H1 (cell line): ENCODE measurements at regions of chr13 and their contacts with region 1.

Region 1: GRCh38 chr13:42969558-42970172 is 22.4 kb downstream of the EPSTI1 start:
- DNase-seq: peak in 1 of 2 experiments; percentile 93
- H3K4me3 ChIP-seq: no peak overlapping the region
- H3K27ac ChIP-seq: no peak overlapping the region
- H3K4me1 ChIP-seq: peaks cover 3 to 12% (median 4%) of the 10 kb centered on the region in 4 experiments; a peak in 5 of 7 replicates
- H3K27me3 ChIP-seq: no peaks in the 10 kb centered on the region
- CTCF ChIP-seq: peak; percentile 71 to 82 (median 81)
- EP300 ChIP-seq: no peak
- POLR2A ChIP-seq: no peak
- RAD21 ChIP-seq: peak; percentile 67 to 72

Region 2: DNA sequence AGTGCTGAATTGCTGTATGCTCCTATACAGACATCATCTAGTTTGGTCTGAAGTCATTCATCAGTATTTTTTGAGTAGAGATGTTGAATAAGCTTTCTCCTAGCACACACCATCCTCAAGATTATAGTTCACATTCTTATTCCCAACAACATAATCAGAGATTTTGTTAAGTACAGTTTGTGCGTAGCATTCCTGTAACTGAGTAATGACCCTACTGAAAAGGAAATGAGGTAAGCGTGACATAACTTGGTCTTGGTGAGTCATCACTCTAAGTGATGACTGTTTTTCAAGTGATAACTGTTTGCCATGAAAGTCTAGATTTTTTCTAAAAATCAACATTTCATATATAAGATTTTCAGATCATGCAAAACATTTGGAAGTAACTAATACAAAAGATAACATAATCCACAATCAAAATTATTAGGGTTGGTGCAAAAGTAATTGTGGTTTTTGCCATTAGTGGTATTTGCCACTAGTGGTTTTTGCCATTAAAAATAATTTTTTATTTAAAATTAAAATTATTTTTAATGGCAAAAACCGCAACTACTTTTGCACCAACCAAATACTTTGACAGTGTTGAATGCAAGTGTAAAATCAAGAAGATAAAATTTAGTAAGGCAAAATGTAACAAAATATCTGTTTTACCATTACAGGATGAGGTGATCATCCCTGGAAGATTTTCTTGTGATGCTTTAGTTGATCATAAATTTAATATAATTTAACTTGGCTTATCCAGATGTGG is 206.6 kb before region 1 on chr13:
- CTCF ChIA-PET with region 1: no interaction called
- POLR2A ChIA-PET with region 1: no interaction called
- DNase-seq: no peak
- H3K4me3 ChIP-seq: no peak overlapping the region
- H3K27ac ChIP-seq: no peak overlapping the region
- H3K4me1 ChIP-seq: no peaks in the 10 kb centered on the region
- H3K27me3 ChIP-seq: no peaks in the 10 kb centered on the region
- CTCF ChIP-seq: no peak
- EP300 ChIP-seq: no peak
- POLR2A ChIP-seq: no peak
- RAD21 ChIP-seq: no peak

Region 3: GRCh38 chr13:42883771-42884467 is 85.7 kb before region 1 on chr13:
- CTCF ChIA-PET with region 1: interaction called, 14 read pairs
- POLR2A ChIA-PET with region 1: no interaction called
- DNase-seq: peak in 1 of 2 experiments; percentile 42
- H3K4me3 ChIP-seq: no peak overlapping the region
- H3K27ac ChIP-seq: no peak overlapping the region
- H3K4me1 ChIP-seq: peaks cover 0 to 3% (median 0%) of the 10 kb centered on the region in 4 experiments; a peak in 2 of 7 replicates
- H3K27me3 ChIP-seq: no peaks in the 10 kb centered on the region; a peak in 1 of 7 replicates
- CTCF ChIP-seq: peak; percentile 10 to 38 (median 17); a peak in 2 of 4 replicates
- EP300 ChIP-seq: no peak
- POLR2A ChIP-seq: no peak
- RAD21 ChIP-seq: peak; percentile 59 to 61

Region 4: GRCh38 chr13:42985312-42986175 is 15.9 kb after region 1 on chr13:
- CTCF ChIA-PET with region 1: interaction called, 25 read pairs
- POLR2A ChIA-PET with region 1: no interaction called
- DNase-seq: no peak
- H3K4me3 ChIP-seq: no peak overlapping the region
- H3K27ac ChIP-seq: no peak overlapping the region
- H3K4me1 ChIP-seq: peaks cover 0 to 4% (median 3%) of the 10 kb centered on the region in 4 experiments; a peak in 4 of 7 replicates
- H3K27me3 ChIP-seq: no peaks in the 10 kb centered on the region
- CTCF ChIP-seq: no peak
- EP300 ChIP-seq: no peak
- POLR2A ChIP-seq: no peak
- RAD21 ChIP-seq: no peak

Region 5: DNA sequence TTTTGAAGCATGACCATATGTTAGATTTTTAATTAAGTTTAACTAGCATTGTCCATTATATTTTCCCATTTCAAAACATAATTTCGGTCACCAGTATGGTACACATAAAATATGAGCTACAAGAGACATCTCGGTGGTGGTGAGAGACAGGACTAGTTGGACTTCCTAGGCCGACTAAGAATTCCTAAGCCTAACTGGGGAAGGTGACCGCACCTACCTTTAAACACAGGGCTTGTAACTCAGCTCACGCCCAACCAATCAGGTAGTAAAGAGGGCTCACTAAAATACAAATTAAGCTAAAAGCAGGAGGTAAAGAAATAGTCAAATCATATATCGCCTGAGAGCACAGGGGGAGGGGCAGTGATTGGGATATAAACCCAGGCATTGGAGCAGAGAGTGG is 76.6 kb after region 1 on chr13:
- CTCF ChIA-PET with region 1: interaction called, 15 read pairs
- POLR2A ChIA-PET with region 1: no interaction called
- DNase-seq: no peak
- H3K4me3 ChIP-seq: no peak overlapping the region
- H3K27ac ChIP-seq: no peak overlapping the region
- H3K4me1 ChIP-seq: peaks cover 0 to 3% (median 2%) of the 10 kb centered on the region in 4 experiments; a peak in 4 of 7 replicates
- H3K27me3 ChIP-seq: no peaks in the 10 kb centered on the region
- CTCF ChIP-seq: no peak
- EP300 ChIP-seq: no peak
- POLR2A ChIP-seq: no peak
- RAD21 ChIP-seq: no peak

Region 6: GRCh38 chr13:43374621-43375020 is 405.0 kb after region 1 on chr13:
- CTCF ChIA-PET with region 1: no interaction called
- POLR2A ChIA-PET with region 1: no interaction called
- DNase-seq: no peak
- H3K4me3 ChIP-seq: no peak overlapping the region
- H3K27ac ChIP-seq: no peak overlapping the region
- H3K4me1 ChIP-seq: no peaks in the 10 kb centered on the region
- H3K27me3 ChIP-seq: no peaks in the 10 kb centered on the region
- CTCF ChIP-seq: no peak
- EP300 ChIP-seq: no peak
- POLR2A ChIP-seq: no peak
- RAD21 ChIP-seq: no peak